ENCODE measurements at regions of chr11 and their contacts with region 1.

Region 1: DNA sequence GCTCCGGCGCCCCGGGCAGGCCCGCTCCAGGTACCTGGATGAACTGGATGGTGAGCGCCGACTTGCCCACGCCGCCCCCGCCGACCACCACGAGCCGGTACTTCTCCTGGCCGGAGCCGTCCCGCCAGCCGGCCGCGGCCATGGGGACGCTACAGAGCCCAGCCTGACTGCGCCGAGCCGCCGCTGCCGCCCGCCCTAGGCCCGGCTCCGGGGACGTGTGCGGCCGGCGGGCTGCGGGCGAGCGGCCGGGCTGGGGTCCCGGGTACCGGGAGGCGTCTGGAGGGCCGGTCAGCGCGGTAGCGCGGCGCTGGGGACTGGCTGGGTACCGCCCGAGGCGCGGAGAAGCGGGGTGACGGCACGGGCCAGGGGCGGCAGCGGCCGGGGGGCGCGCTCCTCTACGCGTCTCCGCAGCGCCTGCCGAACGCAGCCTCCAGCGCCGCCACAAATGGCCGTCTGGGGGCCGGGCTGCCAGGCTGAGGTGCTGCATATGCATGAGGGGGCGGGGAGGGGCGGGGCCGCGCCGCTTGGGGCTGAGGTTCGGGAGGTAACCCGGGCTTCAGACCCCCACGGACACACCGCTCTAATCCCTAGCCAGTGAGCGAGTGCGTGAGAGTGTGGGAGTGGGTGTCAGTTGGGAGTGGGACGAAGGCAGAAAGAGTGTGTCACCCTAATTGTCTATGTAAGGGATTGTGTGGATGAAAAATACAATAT is at the start of gene RRAS2:
- DNase-seq: peak; percentile 77
- ATAC-seq: peak; percentile 90
- H3K4me3 Mint-ChIP-seq: peak within 1 kb of the TSS; percentile 89
- H3K27ac Mint-ChIP-seq: peak within 1 kb of the TSS; percentile 81
- H3K4me1 Mint-ChIP-seq: peaks cover 44% of the 10 kb centered on the region
- H3K27me3 Mint-ChIP-seq: no peaks in the 10 kb centered on the region
- CTCF ChIP-seq: no peak
- total RNA-seq, gene RRAS2: 97.7 and 106 TPM in 2 replicates

Region 2: GRCh38 chr11:13942983-13943382 is 415.9 kb before region 1 on chr11:
- CTCF ChIA-PET with region 1: no interaction called
- POLR2A ChIA-PET with region 1: no interaction called
- intact Hi-C with region 1: no loop called
- DNase-seq: no peak
- ATAC-seq: no peak
- H3K4me3 Mint-ChIP-seq: no peak overlapping the region
- H3K27ac Mint-ChIP-seq: no peak overlapping the region
- H3K4me1 Mint-ChIP-seq: no peaks in the 10 kb centered on the region
- H3K27me3 Mint-ChIP-seq: peaks cover 9% of the 10 kb centered on the region
- CTCF ChIP-seq: no peak

Region 3: DNA sequence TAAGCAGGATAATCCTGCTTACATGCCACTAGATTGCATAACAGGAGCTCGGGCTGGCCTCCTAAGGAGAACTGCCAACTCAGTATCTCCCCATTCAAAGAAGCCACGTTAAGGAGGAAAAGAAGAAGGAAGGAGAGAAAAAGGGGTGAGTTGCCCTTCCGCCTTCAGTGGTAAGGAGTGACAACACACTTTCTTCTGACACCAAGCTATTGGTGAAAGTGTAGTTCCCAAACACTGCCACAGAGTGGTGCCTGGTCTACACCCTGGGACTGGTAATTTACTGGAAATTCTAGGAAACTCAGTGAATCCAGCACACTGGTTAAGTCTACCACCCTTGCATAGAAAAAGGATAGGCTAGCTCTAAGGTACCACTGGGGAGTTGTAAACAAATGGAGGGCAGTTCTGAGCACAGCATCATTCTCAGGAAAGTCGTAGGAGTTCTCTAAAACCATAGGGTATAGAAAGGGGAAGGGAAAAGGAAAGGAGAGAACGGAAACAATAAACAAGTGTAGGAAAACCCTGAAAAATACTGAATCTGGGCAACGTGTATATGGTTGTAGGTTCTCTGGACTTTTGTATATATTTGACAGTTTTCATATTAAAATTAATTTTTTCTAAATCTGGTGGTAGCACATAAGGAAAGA is 58.1 kb before region 1 on chr11:
- CTCF ChIA-PET with region 1: interaction called, 5 read pairs
- POLR2A ChIA-PET with region 1: interaction called, 4 read pairs
- intact Hi-C with region 1: loop called (anchors 1 kb)
- DNase-seq: no peak
- ATAC-seq: peak; percentile 92
- H3K4me3 Mint-ChIP-seq: no peak overlapping the region
- H3K27ac Mint-ChIP-seq: no peak overlapping the region
- H3K4me1 Mint-ChIP-seq: peaks cover 60% of the 10 kb centered on the region
- H3K27me3 Mint-ChIP-seq: no peaks in the 10 kb centered on the region
- CTCF ChIP-seq: no peak

Region 4: DNA sequence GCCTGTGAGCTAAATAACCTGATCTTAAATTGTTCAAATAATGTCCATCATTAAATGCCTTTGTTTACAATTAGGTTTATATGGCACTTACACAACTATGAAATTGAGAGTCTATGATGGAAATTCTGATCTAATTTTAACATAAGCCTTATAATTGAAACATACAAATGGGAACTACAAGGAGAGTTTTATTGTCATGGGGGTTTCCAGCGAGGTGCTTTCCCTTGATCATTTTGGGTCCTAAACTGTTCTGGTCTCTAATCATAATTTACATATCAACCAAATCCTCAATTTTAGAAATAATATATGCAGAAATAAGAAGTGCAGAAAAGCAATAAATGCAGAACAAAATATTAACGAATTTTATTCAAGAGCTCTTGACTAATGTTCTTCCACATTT is 44.8 kb before region 1 on chr11:
- CTCF ChIA-PET with region 1: interaction called, 3 read pairs
- POLR2A ChIA-PET with region 1: interaction called, 23 read pairs
- intact Hi-C with region 1: loop called (anchors 1 kb)
- DNase-seq: no peak
- ATAC-seq: peak; percentile 66
- H3K4me3 Mint-ChIP-seq: peak overlapping the region; percentile 74
- H3K27ac Mint-ChIP-seq: no peak overlapping the region
- H3K4me1 Mint-ChIP-seq: peaks cover 75% of the 10 kb centered on the region
- H3K27me3 Mint-ChIP-seq: no peaks in the 10 kb centered on the region
- CTCF ChIP-seq: no peak

Region 5: DNA sequence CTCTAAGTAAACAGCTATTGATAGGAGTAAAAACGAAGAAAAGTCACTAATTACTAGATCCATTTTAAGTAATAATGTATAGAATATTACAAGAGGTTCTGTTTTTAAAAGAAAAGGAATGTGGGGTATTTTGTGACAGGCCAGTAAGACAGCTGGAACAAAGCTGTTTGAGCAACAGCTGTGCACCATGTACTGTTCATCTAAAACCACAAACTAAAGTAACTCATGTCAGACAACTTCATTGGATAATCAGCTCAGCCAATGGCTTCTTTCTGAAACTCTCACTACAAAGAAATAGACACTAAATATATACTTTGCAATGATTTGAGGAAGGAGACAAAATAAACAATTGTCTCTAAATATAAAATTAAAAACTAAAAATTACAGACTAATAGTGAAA is 16.0 kb before region 1 on chr11:
- CTCF ChIA-PET with region 1: interaction called, 3 read pairs
- POLR2A ChIA-PET with region 1: interaction called, 8 read pairs
- intact Hi-C with region 1: loop called (anchors 2 kb)
- DNase-seq: no peak
- ATAC-seq: peak; percentile 32
- H3K4me3 Mint-ChIP-seq: no peak overlapping the region
- H3K27ac Mint-ChIP-seq: no peak overlapping the region
- H3K4me1 Mint-ChIP-seq: peaks cover 75% of the 10 kb centered on the region
- H3K27me3 Mint-ChIP-seq: no peaks in the 10 kb centered on the region
- CTCF ChIP-seq: no peak

Region 6: DNA sequence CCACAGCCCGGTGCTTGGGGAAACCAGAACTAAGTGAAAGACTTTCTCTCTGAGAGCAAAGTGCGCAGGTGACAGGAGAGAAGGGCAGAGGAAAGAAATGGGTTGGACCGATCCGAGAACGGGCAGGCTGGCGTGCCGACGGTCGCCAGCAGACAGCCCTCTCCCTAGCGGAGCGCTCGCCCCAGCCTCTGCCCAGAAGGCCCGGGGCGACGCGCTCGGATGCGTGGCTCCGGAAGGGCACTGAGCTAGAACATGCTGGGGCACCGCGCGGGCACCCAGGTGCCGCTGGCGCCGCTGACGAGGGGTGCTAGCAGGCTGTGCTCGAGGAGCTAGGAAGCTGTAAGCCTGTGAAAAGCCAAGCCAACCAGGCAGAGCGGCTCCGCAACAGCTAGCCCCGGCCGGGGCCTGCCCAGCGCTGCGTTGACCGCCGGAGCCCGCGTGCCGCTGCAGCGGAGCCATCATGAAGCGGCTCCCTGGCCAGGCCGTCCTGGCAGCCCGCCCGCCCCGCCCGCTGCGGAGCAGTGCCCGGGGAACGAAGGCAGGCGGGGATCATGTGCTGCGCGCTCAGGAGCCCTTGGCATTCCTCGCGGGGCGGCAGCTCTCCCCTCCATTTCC is 22.2 kb after region 1 on chr11:
- CTCF ChIA-PET with region 1: no interaction called
- POLR2A ChIA-PET with region 1: interaction called, 4 read pairs
- intact Hi-C with region 1: loop called (anchors 1 kb)
- DNase-seq: peak; percentile 64
- ATAC-seq: peak; percentile 96
- H3K4me3 Mint-ChIP-seq: peak overlapping the region; percentile 83
- H3K27ac Mint-ChIP-seq: peak overlapping the region; percentile 81
- H3K4me1 Mint-ChIP-seq: peaks cover 14% of the 10 kb centered on the region
- H3K27me3 Mint-ChIP-seq: no peaks in the 10 kb centered on the region
- CTCF ChIP-seq: no peak

Region 7: DNA sequence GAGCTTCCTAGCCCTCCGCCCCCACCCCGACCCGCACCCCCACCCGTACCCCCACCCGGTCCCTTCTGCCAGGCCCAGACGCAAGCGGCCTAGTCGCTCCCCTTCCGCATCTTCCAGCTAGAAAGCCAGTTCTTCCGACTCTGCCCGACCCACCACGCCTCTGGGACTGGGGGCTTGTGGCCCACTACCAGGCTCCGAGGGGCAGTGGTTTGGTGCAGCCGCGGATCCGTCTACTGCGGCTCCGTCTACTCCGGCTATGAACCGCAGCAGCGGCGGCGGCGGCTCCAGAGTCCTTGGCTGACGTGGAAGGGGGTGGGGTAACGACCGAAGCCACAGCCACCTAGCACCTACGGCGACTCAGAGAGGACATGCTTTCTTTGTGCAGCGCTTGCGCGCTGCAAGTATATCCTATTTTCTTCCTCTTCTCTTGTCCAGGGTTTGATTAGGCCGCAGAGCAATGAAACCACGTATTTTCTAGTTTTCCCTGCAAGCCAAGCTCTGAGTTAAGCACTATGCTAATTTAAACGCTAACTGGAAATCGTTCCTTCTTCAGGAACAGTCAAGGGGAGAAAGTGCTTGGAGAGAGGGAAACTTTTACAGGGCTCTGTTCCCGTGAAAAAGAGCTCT is 140.8 kb after region 1 on chr11 and contains the start of gene COPB1:
- CTCF ChIA-PET with region 1: no interaction called
- POLR2A ChIA-PET with region 1: no interaction called
- intact Hi-C with region 1: loop called (anchors 5 kb)
- DNase-seq: peak; percentile 81
- ATAC-seq: peak; percentile 95
- H3K4me3 Mint-ChIP-seq: peak within 1 kb of the TSS; percentile 100
- H3K27ac Mint-ChIP-seq: peak within 1 kb of the TSS; percentile 96
- H3K4me1 Mint-ChIP-seq: peaks cover 41% of the 10 kb centered on the region
- H3K27me3 Mint-ChIP-seq: no peaks in the 10 kb centered on the region
- CTCF ChIP-seq: no peak
- total RNA-seq, gene COPB1: 80.7 and 90.1 TPM in 2 replicates

Region 8: GRCh38 chr11:14583252-14584034 is 224.6 kb after region 1 on chr11:
- CTCF ChIA-PET with region 1: no interaction called
- POLR2A ChIA-PET with region 1: no interaction called
- intact Hi-C with region 1: no loop called
- DNase-seq: no peak
- ATAC-seq: no peak
- H3K4me3 Mint-ChIP-seq: no peak overlapping the region
- H3K27ac Mint-ChIP-seq: no peak overlapping the region
- H3K4me1 Mint-ChIP-seq: peaks cover 19% of the 10 kb centered on the region
- H3K27me3 Mint-ChIP-seq: peaks cover 5% of the 10 kb centered on the region
- CTCF ChIP-seq: no peak

Measured in activated B cell treated with CpG ODN at 0.5 μM for 24 hours (primary cell).